ENCODE measurements at regions of chr1 and their contacts with region 1.

Region 1: GRCh38 chr1:46036894-46037839 is 95.3 kb downstream of the PIK3R3 start:
- DNase-seq: peak; percentile 92
- ATAC-seq: peak; percentile 59

Region 2: DNA sequence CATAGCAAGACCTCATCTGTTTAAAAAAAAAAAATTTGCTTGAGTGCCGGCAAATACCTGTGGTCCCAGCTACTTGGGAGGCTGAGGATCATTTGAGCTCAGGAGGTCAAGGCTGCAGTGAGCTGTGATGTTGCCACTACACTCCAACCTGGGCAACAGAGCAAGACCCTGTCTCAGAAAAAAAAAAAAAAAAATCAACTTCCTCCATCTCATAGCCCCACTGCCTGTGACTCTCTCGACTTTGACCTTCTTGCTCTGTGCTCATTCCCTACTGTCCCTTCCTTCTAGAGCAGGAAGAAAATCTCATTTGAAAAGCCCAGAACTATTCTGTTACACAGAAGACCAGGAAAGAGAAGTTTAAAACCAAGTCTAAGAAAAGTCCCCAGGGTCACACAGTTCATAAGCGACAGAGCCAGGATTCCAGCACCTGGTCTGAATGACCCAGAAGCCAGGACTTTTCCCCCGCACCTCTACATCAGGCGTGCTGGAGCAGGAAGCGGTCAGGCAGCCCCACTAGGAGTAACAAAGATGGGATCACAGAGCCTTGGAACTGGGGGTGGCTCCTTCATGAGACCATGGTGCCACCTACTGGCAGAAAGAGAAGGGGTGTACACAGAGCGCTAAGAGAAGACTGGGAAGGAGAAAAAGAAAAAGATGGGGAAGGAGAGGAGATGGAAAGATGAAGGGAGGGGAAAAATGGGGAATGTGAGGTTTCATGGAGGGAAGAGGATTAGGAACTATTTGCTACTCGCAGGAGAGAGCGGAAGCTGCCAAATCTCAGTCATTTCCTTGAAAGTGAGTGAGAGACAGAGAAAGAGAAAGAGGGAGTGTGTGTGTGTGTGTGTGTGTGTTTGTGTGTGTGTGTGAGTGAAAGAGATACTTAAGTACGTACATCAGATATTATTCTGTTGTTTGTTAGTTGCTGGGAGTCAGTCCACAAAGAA is 142.2 kb after region 1 on chr1:
- intact Hi-C with region 1: loop called (anchors 2 kb)
- DNase-seq: peak; percentile 70
- ATAC-seq: peak; percentile 82

Region 3: DNA sequence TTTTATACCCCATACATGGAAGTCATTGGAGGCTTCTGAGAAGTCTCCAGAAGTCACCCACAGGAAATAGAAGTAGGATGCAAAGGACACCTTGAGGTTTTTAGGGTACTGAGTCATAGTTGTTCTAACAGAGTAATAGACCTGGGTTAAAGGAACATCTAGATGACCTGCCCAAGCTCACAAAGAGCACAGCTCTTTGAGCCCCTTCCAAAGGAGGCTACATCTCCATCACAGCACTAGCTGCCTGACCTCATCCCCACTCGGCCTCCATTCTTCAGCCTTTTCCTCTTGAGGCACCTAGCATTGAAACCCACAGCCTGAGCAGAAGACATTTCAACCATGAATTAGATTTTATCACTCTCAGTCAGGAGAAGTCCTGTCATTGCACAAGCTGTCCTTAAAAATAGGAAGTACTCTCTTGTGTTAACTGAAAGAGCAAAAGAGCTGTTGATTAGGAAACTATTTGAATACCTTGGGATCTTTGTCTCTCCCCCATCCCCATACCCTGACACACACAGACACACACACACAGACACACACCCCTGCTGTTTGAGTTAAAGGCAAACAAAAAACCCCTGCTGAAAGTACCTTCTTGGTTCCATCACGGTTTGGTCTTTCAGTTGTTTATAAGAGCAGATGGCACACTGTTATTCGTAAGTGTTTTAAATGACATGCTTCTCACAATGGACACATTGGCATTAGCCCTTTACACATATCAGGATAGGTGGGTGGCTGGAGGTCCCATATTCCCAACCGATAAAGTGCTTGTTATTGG is 544.7 kb after region 1 on chr1:
- intact Hi-C with region 1: no loop called
- DNase-seq: no peak
- ATAC-seq: peak; percentile 34